CD8-positive, alpha-beta T cell (primary cell): ENCODE measurements at regions of chr20 and their contacts with region 1.

Region 1: DNA sequence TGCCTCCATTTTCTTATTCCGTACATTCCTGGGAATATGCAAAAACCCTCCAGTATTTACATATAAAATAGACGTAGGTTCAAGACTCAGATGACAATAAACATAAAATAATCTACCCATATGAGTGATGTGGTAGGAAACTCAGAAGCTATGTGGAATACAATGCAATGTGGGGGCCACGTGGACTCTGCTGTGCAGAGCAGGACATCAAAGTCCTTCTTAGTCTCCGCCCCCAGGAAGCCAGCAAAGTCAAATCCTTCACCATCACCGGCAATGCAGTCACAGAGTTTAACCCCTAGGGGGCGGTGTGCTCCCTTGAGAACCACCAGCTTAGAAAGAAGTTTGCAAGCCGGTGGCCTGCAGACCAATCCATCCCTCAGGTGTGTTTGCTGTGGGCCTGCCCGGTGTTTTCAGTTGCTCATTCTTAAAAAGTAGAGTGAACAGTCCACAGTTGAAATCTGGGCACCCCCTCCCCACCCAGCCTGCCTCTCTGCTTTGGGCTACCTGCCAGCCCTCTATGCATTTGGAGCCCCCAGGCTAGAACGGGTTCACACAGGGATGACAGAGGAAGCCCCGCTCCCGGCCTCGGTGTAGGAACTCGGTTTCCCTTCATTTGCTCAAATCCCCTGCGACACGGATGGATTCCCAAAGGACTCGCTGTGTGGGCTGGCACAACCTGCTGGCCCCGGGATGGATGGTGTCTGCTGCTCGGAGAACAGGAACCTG is 59.9 kb downstream of the SULF2 start:
- DNase-seq: peak; percentile 61 to 90 (median 80)
- ATAC-seq: peak; percentile 64
- H3K4me3 ChIP-seq: no peak overlapping the region
- H3K4me3 Mint-ChIP-seq: no peak overlapping the region
- H3K27ac ChIP-seq: no peak overlapping the region
- H3K27ac Mint-ChIP-seq: peak overlapping the region; percentile 52
- H3K4me1 ChIP-seq: peaks cover 36% of the 10 kb centered on the region
- H3K4me1 Mint-ChIP-seq: peaks cover 41% of the 10 kb centered on the region
- H3K27me3 ChIP-seq: no peaks in the 10 kb centered on the region
- H3K27me3 Mint-ChIP-seq: no peaks in the 10 kb centered on the region
- CTCF ChIP-seq: peak; percentile 91

Region 2: DNA sequence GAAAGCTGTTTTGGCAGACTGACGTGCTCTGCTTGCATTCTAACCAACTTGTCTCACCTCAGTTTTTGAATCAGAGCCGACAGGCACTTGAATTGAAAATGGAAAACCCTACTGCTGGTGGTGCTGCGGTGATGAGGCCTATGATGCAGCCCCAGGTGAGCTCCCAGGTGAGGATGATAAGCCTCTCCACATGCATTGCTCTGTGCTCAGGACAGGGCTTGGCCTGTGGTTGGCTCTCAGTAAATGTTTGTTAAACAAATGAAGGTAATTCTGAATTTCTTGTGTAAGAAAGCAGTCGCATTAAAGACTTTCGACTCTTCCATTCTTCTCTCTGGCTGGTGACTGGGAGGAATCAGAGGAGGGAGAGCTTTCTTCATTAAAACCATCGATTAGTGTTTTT is 76.5 kb before region 1 on chr20:
- CTCF ChIA-PET with region 1: no interaction called
- POLR2A ChIA-PET with region 1: no interaction called
- intact Hi-C with region 1: no loop called
- DNase-seq: no peak
- ATAC-seq: no peak
- H3K4me3 ChIP-seq: no peak overlapping the region
- H3K4me3 Mint-ChIP-seq: no peak overlapping the region
- H3K27ac ChIP-seq: no peak overlapping the region
- H3K27ac Mint-ChIP-seq: no peak overlapping the region
- H3K4me1 ChIP-seq: no peaks in the 10 kb centered on the region
- H3K4me1 Mint-ChIP-seq: no peaks in the 10 kb centered on the region
- H3K27me3 ChIP-seq: no peaks in the 10 kb centered on the region
- H3K27me3 Mint-ChIP-seq: no peaks in the 10 kb centered on the region
- CTCF ChIP-seq: no peak

Region 3: GRCh38 chr20:47785854-47786764 is 60.7 kb after region 1 on chr20:
- CTCF ChIA-PET with region 1: no interaction called
- POLR2A ChIA-PET with region 1: no interaction called
- intact Hi-C with region 1: loop called in 1 of 2 experiments (anchors 5 kb)
- DNase-seq: peak in 1 of 9 experiments; percentile 22
- ATAC-seq: no peak
- H3K4me3 ChIP-seq: peak overlapping the region in 1 of 2 experiments; percentile 33
- H3K4me3 Mint-ChIP-seq: peak overlapping the region; percentile 74
- H3K27ac ChIP-seq: no peak overlapping the region
- H3K27ac Mint-ChIP-seq: no peak overlapping the region
- H3K4me1 ChIP-seq: peaks cover 13% of the 10 kb centered on the region
- H3K4me1 Mint-ChIP-seq: peaks cover 19% of the 10 kb centered on the region
- H3K27me3 ChIP-seq: peaks cover 8 to 11% of the 10 kb centered on the region in 2 experiments
- H3K27me3 Mint-ChIP-seq: peaks cover 55% of the 10 kb centered on the region
- CTCF ChIP-seq: no peak

Region 4: GRCh38 chr20:47875714-47875998 is 150.2 kb after region 1 on chr20:
- CTCF ChIA-PET with region 1: no interaction called
- POLR2A ChIA-PET with region 1: no interaction called
- intact Hi-C with region 1: loop called in 1 of 2 experiments (anchors 10 kb)
- DNase-seq: no peak
- ATAC-seq: no peak
- H3K4me3 ChIP-seq: no peak overlapping the region
- H3K4me3 Mint-ChIP-seq: no peak overlapping the region
- H3K27ac ChIP-seq: no peak overlapping the region
- H3K27ac Mint-ChIP-seq: no peak overlapping the region
- H3K4me1 ChIP-seq: no peaks in the 10 kb centered on the region
- H3K4me1 Mint-ChIP-seq: no peaks in the 10 kb centered on the region
- H3K27me3 ChIP-seq: no peaks in the 10 kb centered on the region
- H3K27me3 Mint-ChIP-seq: no peaks in the 10 kb centered on the region
- CTCF ChIP-seq: no peak

Region 5: DNA sequence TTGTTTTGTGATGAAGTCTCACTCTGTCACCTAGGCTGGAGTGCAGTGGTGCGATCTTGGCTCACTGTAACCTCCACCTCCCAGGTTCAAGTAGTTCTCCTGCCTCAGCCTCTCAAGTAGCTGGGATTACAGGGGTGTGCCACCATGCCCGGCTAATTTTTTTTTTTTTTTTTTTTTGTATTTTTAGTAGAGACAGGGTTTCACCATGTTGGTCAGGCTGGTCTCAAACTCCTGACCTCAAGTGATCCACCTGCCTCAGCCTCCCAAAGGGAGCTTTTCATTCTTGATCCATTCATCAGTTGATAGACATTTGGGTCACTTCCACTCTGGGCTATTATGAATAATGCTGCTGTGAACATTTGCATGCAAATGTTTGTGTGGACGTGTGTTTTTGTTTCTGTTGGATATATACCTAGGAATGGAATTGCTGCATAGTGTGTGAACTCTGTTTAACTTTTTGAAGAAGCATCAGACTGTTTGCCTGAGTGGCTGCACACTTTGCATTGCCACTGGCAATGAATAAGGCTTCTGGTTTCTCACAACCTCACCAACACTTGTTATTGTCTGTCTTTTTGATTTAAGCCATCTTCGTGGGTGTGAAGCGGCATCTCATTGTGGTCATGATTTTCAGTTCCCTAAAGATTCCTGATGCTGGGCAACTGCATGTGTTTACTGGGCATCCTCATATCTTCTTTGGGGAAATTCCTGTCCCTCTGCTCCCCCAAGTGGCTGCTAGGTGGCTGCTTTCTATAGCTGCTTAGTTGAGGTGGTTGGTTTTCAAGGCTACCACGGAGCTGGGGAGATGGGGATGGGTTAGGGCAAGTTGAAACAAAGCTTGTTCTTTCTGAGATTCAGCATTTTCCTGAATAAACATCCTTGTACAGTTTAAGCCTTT is 463.5 kb after region 1 on chr20:
- CTCF ChIA-PET with region 1: no interaction called
- POLR2A ChIA-PET with region 1: no interaction called
- intact Hi-C with region 1: loop called in 1 of 2 experiments (anchors 5 kb)
- DNase-seq: no peak
- ATAC-seq: no peak
- H3K4me3 ChIP-seq: no peak overlapping the region
- H3K4me3 Mint-ChIP-seq: no peak overlapping the region
- H3K27ac ChIP-seq: no peak overlapping the region
- H3K27ac Mint-ChIP-seq: no peak overlapping the region
- H3K4me1 ChIP-seq: no peaks in the 10 kb centered on the region
- H3K4me1 Mint-ChIP-seq: no peaks in the 10 kb centered on the region
- H3K27me3 ChIP-seq: no peaks in the 10 kb centered on the region
- H3K27me3 Mint-ChIP-seq: no peaks in the 10 kb centered on the region
- CTCF ChIP-seq: no peak

Region 6: GRCh38 chr20:48921151-48921898 is 1195.9 kb after region 1 on chr20 and contains the start of gene ARFGEF2:
- CTCF ChIA-PET with region 1: no interaction called
- POLR2A ChIA-PET with region 1: no interaction called
- intact Hi-C with region 1: loop called (anchors 5 kb)
- DNase-seq: peak; percentile 79 to 96 (median 89)
- ATAC-seq: peak; percentile 92
- H3K4me3 ChIP-seq: peak within 1 kb of the TSS; percentile 77 to 99
- H3K4me3 Mint-ChIP-seq: peak within 1 kb of the TSS; percentile 93
- H3K27ac ChIP-seq: peak within 1 kb of the TSS; percentile 93 to 94
- H3K27ac Mint-ChIP-seq: peak within 1 kb of the TSS; percentile 95
- H3K4me1 ChIP-seq: peaks cover 28% of the 10 kb centered on the region
- H3K4me1 Mint-ChIP-seq: peaks cover 49% of the 10 kb centered on the region
- H3K27me3 ChIP-seq: no peaks in the 10 kb centered on the region
- H3K27me3 Mint-ChIP-seq: no peaks in the 10 kb centered on the region
- CTCF ChIP-seq: no peak
- total RNA-seq, gene ARFGEF2: 25.7 to 26.7 TPM